SK-N-SH (cell line): ENCODE measurements at regions of chr6 and their contacts with region 1.

Region 1: GRCh38 chr6:27795697-27796494 is 116.3 kb downstream of the OR2B2 start:
- DNase-seq: peak; percentile 53
- H3K4me3 ChIP-seq: no peak overlapping the region; a peak in 1 of 4 replicates
- H3K27ac ChIP-seq: peak overlapping the region in 1 of 2 experiments; percentile 28; a peak in 1 of 4 replicates
- H3K4me1 ChIP-seq: peaks cover 0 to 12% of the 10 kb centered on the region in 2 experiments; a peak in 2 of 4 replicates
- H3K27me3 ChIP-seq: no peaks in the 10 kb centered on the region
- CTCF ChIP-seq: peak; percentile 81
- EP300 ChIP-seq: no peak
- RAD21 ChIP-seq: peak; percentile 68

Region 2: GRCh38 chr6:27157459-27158315 is 638.2 kb before region 1 on chr6:
- CTCF ChIA-PET with region 1: interaction called, 25 read pairs
- POLR2A ChIA-PET with region 1: no interaction called
- DNase-seq: no peak
- H3K4me3 ChIP-seq: peak overlapping the region; percentile 53 to 57
- H3K27ac ChIP-seq: no peak overlapping the region
- H3K4me1 ChIP-seq: no peaks in the 10 kb centered on the region; a peak in 1 of 4 replicates
- H3K27me3 ChIP-seq: no peaks in the 10 kb centered on the region
- CTCF ChIP-seq: peak; percentile 57
- EP300 ChIP-seq: no peak
- RAD21 ChIP-seq: peak; percentile 42; the same call in 1 of the 2 replicates

Region 3: GRCh38 chr6:27177485-27178406 is 618.1 kb before region 1 on chr6:
- CTCF ChIA-PET with region 1: interaction called, 15 read pairs
- POLR2A ChIA-PET with region 1: no interaction called
- DNase-seq: peak; percentile 72
- H3K4me3 ChIP-seq: peak overlapping the region; percentile 98 to 100
- H3K27ac ChIP-seq: peak overlapping the region; percentile 81 to 85
- H3K4me1 ChIP-seq: peaks cover 0 to 3% of the 10 kb centered on the region in 2 experiments; a peak in 1 of 4 replicates
- H3K27me3 ChIP-seq: no peaks in the 10 kb centered on the region
- CTCF ChIP-seq: peak; percentile 63
- EP300 ChIP-seq: no peak
- RAD21 ChIP-seq: peak; percentile 47

Region 4: DNA sequence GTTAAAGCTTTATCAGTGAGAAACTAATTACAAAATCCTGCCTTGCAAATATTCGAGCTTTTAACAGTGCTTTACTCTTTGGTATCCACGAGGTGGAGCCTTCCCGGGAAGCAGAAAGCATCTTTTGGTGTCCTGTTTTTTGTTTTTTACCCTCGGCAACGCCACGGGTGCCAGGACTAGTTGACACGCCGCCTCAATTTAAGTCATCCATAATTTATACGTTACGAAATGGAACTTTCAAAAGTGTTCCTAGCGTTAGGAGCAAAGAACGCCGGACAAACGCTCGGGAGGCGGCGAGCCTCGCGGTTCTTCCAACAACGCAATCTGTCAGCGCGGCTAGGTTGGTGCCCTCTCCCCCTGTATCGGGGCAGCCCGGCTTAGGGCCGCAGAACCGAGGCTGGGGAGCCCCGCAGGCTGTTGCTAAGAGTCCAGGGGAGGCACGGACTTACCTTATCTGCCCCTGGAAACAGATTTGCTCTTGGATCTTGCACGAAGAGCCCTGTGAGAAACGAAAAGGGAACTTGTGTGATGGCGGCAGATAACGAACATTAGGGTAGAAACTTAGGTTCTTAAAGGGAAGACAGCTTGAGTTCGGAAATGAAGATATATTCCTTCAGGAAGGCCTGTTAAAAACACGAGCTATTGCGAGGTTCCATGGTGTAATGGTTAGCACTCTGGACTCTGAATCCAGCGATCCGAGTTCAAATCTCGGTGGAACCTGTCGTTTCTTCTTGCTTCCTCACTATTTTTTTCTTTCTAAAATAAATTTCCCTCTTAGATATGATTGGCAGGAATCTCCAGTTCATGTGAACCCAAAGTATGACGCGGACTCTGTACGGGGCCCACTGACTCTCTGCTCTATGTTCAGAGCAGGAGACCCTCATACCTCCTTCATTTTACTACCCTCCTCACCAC is 276.8 kb before region 1 on chr6:
- CTCF ChIA-PET with region 1: interaction called, 25 read pairs
- POLR2A ChIA-PET with region 1: no interaction called
- DNase-seq: peak; percentile 67
- H3K4me3 ChIP-seq: peak overlapping the region; percentile 93 to 97
- H3K27ac ChIP-seq: peak overlapping the region in 1 of 2 experiments; percentile 53; a peak in 2 of 4 replicates
- H3K4me1 ChIP-seq: peaks cover 0 to 3% of the 10 kb centered on the region in 2 experiments; a peak in 2 of 4 replicates
- H3K27me3 ChIP-seq: peaks cover 23% of the 10 kb centered on the region
- CTCF ChIP-seq: peak; percentile 86
- EP300 ChIP-seq: no peak
- RAD21 ChIP-seq: peak; percentile 57

Region 5: GRCh38 chr6:27772261-27773001 is 23.5 kb before region 1 on chr6:
- CTCF ChIA-PET with region 1: interaction called, 53 read pairs
- POLR2A ChIA-PET with region 1: no interaction called
- DNase-seq: peak; percentile 83
- H3K4me3 ChIP-seq: no peak overlapping the region; a peak in 1 of 4 replicates
- H3K27ac ChIP-seq: no peak overlapping the region
- H3K4me1 ChIP-seq: peaks cover 0 to 3% of the 10 kb centered on the region in 2 experiments; a peak in 1 of 4 replicates
- H3K27me3 ChIP-seq: no peaks in the 10 kb centered on the region
- CTCF ChIP-seq: peak; percentile 88
- EP300 ChIP-seq: no peak
- RAD21 ChIP-seq: peak; percentile 67

Region 6: DNA sequence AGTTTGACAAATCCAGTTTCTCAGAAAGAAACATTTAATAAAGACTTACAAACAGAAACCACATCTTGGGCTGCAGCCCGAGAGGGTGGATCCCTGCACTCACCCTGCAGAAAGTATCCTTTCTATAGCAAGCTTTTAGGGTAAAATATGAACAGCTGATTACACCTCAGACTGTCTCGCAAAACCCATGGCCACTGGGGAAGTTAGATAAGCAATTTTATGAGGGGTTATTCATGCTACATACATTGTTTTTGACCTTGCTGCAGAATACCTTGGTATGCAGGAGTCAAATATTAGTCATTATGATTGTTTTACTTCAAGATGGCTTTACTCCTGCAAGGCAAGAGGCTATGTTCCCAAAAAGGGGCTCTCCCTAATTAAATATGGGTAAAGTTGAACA is 10.6 kb before region 1 on chr6:
- CTCF ChIA-PET with region 1: interaction called, 12 read pairs
- POLR2A ChIA-PET with region 1: no interaction called
- DNase-seq: no peak
- H3K4me3 ChIP-seq: no peak overlapping the region
- H3K27ac ChIP-seq: no peak overlapping the region
- H3K4me1 ChIP-seq: no peaks in the 10 kb centered on the region
- H3K27me3 ChIP-seq: no peaks in the 10 kb centered on the region; the same call in 1 of the 2 replicates
- CTCF ChIP-seq: no peak
- EP300 ChIP-seq: no peak
- RAD21 ChIP-seq: no peak

Region 7: DNA sequence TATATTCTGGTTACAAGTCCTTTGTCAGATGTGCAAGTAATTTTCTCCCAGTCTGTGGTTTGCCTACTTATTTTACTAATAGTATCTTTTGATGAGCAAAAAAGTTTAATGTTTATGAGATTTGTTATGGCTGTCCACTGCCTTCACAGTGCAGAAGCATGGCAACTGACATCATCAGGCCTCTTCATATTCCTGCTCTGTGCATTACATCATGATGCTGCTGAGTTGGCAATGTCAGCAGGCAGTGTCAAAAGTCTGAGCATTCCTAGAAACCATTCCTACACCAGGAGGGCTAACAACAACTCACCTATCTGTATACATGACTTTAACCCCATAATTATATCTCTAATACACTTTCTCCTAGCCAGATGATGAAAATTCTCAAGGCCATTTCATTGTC is 127.1 kb after region 1 on chr6:
- CTCF ChIA-PET with region 1: no interaction called
- POLR2A ChIA-PET with region 1: no interaction called
- DNase-seq: no peak
- H3K4me3 ChIP-seq: no peak overlapping the region
- H3K27ac ChIP-seq: no peak overlapping the region
- H3K4me1 ChIP-seq: no peaks in the 10 kb centered on the region
- H3K27me3 ChIP-seq: no peaks in the 10 kb centered on the region
- CTCF ChIP-seq: no peak
- EP300 ChIP-seq: no peak
- RAD21 ChIP-seq: no peak